ENCODE measurements at regions of chr9 and their contacts with region 1.

Region 1: DNA sequence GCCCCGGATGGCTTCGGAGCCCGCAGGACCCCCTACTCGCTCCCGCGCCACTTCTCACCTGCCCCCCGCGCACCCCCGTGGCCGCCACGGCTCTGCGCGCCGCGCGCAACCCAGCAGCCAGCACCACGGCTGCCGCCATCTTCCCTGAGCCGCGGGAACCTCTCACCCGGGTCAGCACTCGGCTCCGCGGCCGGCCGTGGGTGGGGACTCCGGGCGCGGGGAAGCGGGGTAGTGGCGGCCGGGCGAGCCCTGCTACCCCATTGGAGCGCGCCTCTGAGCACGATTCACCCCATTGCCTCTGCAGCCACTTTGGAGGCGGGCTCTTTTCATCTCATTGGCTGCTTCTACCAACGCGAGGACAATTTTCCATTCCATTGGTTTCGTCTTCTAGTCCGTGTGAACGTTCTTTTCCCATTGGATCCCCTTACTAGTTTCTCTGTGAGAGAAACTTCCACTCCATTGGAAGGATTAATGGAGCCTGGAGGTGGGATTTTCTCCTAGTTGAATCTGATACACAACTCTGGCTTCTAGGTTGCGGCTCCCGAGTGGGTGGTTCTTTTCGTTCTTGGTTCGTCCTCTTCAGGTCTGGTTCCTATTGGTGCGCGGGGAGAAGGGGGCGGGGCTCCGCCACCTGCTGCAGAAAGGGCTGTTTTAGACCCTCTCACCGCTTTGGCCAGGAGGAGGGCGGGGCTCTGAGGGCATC is at the start of gene HINT2:
- DNase-seq: peak; percentile 95 to 99 (median 97)
- ATAC-seq: peak; percentile 79
- H3K4me3 ChIP-seq: peak within 1 kb of the TSS; percentile 76 to 96
- H3K4me3 Mint-ChIP-seq: peak within 1 kb of the TSS; percentile 97
- H3K27ac ChIP-seq: peak within 1 kb of the TSS; percentile 74 to 86
- H3K27ac Mint-ChIP-seq: peak within 1 kb of the TSS; percentile 87
- H3K4me1 ChIP-seq: peaks cover 31% of the 10 kb centered on the region
- H3K4me1 Mint-ChIP-seq: peaks cover 36% of the 10 kb centered on the region
- H3K27me3 ChIP-seq: no peaks in the 10 kb centered on the region
- H3K27me3 Mint-ChIP-seq: no peaks in the 10 kb centered on the region
- CTCF ChIP-seq: no peak
- total RNA-seq, gene HINT2: 10.0 to 13.6 TPM

Region 2: GRCh38 chr9:34522971-34523797 is 1291.8 kb before region 1 on chr9 and contains the start of gene ENHO:
- CTCF ChIA-PET with region 1: no interaction called
- POLR2A ChIA-PET with region 1: no interaction called
- intact Hi-C with region 1: loop called in 1 of 2 experiments (anchors 10 kb)
- DNase-seq: peak; percentile 79 to 96 (median 87)
- ATAC-seq: peak; percentile 97
- H3K4me3 ChIP-seq: peak within 1 kb of the TSS; percentile 48 to 70
- H3K4me3 Mint-ChIP-seq: peak within 1 kb of the TSS; percentile 83
- H3K27ac ChIP-seq: peak within 1 kb of the TSS in 1 of 2 experiments; percentile 33
- H3K27ac Mint-ChIP-seq: no peak within 1 kb of the TSS
- H3K4me1 ChIP-seq: peaks cover 9% of the 10 kb centered on the region
- H3K4me1 Mint-ChIP-seq: peaks cover 4% of the 10 kb centered on the region
- H3K27me3 ChIP-seq: no peaks in the 10 kb centered on the region
- H3K27me3 Mint-ChIP-seq: peaks cover 2% of the 10 kb centered on the region
- CTCF ChIP-seq: no peak
- total RNA-seq, gene ENHO: not detected

Region 3: GRCh38 chr9:35111001-35111933 is 703.7 kb before region 1 on chr9:
- CTCF ChIA-PET with region 1: no interaction called
- POLR2A ChIA-PET with region 1: no interaction called
- intact Hi-C with region 1: loop called (anchors 5 to 10 kb)
- DNase-seq: peak; percentile 88 to 98 (median 96)
- ATAC-seq: peak; percentile 78
- H3K4me3 ChIP-seq: peak overlapping the region; percentile 64 to 73
- H3K4me3 Mint-ChIP-seq: peak overlapping the region; percentile 82
- H3K27ac ChIP-seq: peak overlapping the region; percentile 39 to 79
- H3K27ac Mint-ChIP-seq: peak overlapping the region; percentile 85
- H3K4me1 ChIP-seq: peaks cover 45% of the 10 kb centered on the region
- H3K4me1 Mint-ChIP-seq: peaks cover 53% of the 10 kb centered on the region
- H3K27me3 ChIP-seq: no peaks in the 10 kb centered on the region
- H3K27me3 Mint-ChIP-seq: no peaks in the 10 kb centered on the region
- CTCF ChIP-seq: no peak

Region 4: GRCh38 chr9:35657546-35658136 is 157.4 kb before region 1 on chr9 and contains the start of gene RMRP:
- CTCF ChIA-PET with region 1: interaction called, 3 read pairs
- POLR2A ChIA-PET with region 1: interaction called, 4 read pairs
- intact Hi-C with region 1: loop called in 1 of 2 experiments (anchors 1 kb)
- DNase-seq: peak; percentile 58 to 98 (median 83)
- ATAC-seq: peak; percentile 72
- H3K4me3 ChIP-seq: peak within 1 kb of the TSS; percentile 91 to 94
- H3K4me3 Mint-ChIP-seq: peak within 1 kb of the TSS; percentile 93
- H3K27ac ChIP-seq: peak within 1 kb of the TSS; percentile 99 to 100
- H3K27ac Mint-ChIP-seq: peak within 1 kb of the TSS; percentile 98
- H3K4me1 ChIP-seq: peaks cover 45% of the 10 kb centered on the region
- H3K4me1 Mint-ChIP-seq: peaks cover 69% of the 10 kb centered on the region
- H3K27me3 ChIP-seq: peaks cover 0 to 3% of the 10 kb centered on the region in 2 experiments
- H3K27me3 Mint-ChIP-seq: peaks cover 2% of the 10 kb centered on the region
- CTCF ChIP-seq: no peak
- total RNA-seq, gene RMRP: 22,073 to 26,359 TPM

Region 5: DNA sequence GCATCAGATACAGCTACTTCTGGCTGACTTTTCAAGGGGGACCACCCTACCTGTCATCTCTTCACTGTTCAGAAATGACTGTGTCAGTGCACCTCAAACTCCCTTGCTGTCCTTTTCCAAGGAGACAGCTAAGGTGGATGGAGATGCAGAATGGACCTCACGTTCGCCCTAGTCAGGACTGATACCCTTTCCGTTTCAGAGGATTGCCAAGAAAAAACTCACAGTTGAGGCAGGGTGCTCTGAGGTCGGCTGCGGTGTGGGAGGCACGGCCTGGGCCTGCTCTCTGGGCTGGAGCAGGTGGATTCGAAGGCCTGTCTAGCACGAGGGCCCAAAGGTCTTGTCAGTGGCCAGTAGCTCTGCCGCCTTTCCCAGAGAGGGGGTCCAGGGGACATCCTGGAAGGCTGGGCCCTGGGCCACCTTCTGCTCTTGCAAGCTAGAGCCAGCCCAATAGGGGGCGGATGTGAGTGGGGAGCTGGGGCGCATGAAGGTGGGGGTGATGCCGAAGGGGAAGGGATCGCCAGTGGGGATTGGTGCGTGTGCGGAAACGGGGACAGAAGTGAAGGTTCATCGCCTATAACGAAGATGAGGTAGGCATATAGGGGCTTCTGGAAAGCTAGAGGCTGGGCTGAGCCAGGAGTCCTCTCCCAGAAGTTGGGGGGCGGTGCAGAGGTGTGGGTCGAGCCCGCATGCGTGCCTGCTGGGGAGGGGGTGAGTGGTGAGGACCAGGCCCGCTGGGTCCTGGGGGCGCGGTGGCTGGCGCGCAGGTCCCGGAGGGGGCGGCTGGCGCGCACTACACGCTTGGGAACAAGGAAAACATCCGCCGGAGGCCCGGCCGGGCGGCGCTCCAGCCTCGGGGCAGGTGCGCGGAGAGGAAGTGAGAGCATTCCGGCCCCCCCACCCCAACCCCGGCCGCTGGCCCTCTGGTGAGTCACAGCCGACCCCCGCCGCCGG is 58.4 kb before region 1 on chr9:
- CTCF ChIA-PET with region 1: no interaction called
- POLR2A ChIA-PET with region 1: interaction called, 4 read pairs
- intact Hi-C with region 1: loop called (anchors 2 kb)
- DNase-seq: peak; percentile 49 to 87 (median 80)
- ATAC-seq: peak; percentile 97
- H3K4me3 ChIP-seq: peak overlapping the region; percentile 75 to 98
- H3K4me3 Mint-ChIP-seq: peak overlapping the region; percentile 91
- H3K27ac ChIP-seq: peak overlapping the region; percentile 72 to 83
- H3K27ac Mint-ChIP-seq: peak overlapping the region; percentile 91
- H3K4me1 ChIP-seq: peaks cover 18% of the 10 kb centered on the region
- H3K4me1 Mint-ChIP-seq: peaks cover 52% of the 10 kb centered on the region
- H3K27me3 ChIP-seq: no peaks in the 10 kb centered on the region
- H3K27me3 Mint-ChIP-seq: no peaks in the 10 kb centered on the region
- CTCF ChIP-seq: peak; percentile 67

Region 6: DNA sequence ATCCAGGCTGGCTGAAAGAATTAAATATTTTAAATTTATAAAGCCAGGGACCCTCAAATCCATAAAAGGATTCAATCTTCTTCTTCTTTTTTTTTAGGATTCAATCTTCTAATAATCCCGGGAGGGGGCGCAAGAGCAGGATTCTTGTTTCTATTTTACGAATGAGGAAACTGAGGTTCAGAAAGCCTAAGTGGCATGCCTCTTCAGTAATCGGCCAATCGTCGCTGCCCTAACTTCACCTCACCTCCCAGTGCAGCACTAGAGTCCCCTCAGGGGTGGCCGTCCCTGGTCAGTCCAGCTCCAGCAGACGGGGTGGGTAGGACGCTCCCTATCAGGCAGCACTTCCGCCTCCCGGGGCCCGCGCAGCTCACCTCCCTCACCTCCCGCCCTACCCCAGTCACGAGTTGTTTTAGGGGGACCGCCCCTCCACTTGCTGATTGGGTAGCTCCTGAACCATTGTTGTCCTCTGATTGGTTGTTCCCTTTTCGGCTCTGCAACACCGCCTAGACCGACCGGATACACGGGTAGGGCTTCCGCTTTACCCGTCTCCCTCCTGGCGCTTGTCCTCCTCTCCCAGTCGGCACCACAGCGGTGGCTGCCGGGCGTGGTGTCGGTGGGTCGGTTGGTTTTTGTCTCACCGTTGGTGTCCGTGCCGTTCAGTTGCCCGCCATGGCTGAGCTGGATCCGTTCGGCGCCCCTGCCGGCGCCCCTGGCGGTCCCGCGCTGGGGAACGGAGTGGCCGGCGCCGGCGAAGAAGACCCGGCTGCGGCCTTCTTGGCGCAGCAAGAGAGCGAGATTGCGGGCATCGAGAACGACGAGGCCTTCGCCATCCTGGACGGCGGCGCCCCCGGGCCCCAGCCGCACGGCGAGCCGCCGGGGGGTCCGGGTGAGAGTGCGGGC is 375.6 kb after region 1 on chr9 and contains the start of gene CLTA:
- CTCF ChIA-PET with region 1: no interaction called
- POLR2A ChIA-PET with region 1: no interaction called
- intact Hi-C with region 1: loop called in 1 of 2 experiments (anchors 10 kb)
- DNase-seq: peak; percentile 84 to 99 (median 93)
- ATAC-seq: peak; percentile 97
- H3K4me3 ChIP-seq: peak within 1 kb of the TSS; percentile 63 to 95
- H3K4me3 Mint-ChIP-seq: peak within 1 kb of the TSS; percentile 94
- H3K27ac ChIP-seq: peak within 1 kb of the TSS; percentile 74 to 80
- H3K27ac Mint-ChIP-seq: peak within 1 kb of the TSS; percentile 91
- H3K4me1 ChIP-seq: peaks cover 37% of the 10 kb centered on the region
- H3K4me1 Mint-ChIP-seq: peaks cover 50% of the 10 kb centered on the region
- H3K27me3 ChIP-seq: no peaks in the 10 kb centered on the region
- H3K27me3 Mint-ChIP-seq: no peaks in the 10 kb centered on the region
- CTCF ChIP-seq: peak; percentile 55
- total RNA-seq, gene CLTA: 39.1 to 39.6 TPM